ENCODE measurements at regions of chr1 and their contacts with region 1.

Region 1: GRCh38 chr1:150621497-150622302 is 7.7 kb downstream of the ENSA start:
- DNase-seq: no peak
- H3K4me3 ChIP-seq: no peak overlapping the region
- H3K27me3 ChIP-seq: no peaks in the 10 kb centered on the region
- CTCF ChIP-seq: peak; percentile 79

Region 2: GRCh38 chr1:150548632-150549495 is 72.8 kb before region 1 on chr1 and contains the start of gene ADAMTSL4:
- CTCF ChIA-PET with region 1: interaction called, 11 read pairs
- POLR2A ChIA-PET with region 1: no interaction called
- DNase-seq: no peak
- H3K4me3 ChIP-seq: peak within 1 kb of the TSS; percentile 52
- H3K27me3 ChIP-seq: no peaks in the 10 kb centered on the region
- CTCF ChIP-seq: 0 out of 2 replicates have a peak, but pooled peaks have one; percentile 2
- polyA plus RNA-seq, gene ADAMTSL4: 6.1 and 8.6 TPM in 2 replicates

Region 3: DNA sequence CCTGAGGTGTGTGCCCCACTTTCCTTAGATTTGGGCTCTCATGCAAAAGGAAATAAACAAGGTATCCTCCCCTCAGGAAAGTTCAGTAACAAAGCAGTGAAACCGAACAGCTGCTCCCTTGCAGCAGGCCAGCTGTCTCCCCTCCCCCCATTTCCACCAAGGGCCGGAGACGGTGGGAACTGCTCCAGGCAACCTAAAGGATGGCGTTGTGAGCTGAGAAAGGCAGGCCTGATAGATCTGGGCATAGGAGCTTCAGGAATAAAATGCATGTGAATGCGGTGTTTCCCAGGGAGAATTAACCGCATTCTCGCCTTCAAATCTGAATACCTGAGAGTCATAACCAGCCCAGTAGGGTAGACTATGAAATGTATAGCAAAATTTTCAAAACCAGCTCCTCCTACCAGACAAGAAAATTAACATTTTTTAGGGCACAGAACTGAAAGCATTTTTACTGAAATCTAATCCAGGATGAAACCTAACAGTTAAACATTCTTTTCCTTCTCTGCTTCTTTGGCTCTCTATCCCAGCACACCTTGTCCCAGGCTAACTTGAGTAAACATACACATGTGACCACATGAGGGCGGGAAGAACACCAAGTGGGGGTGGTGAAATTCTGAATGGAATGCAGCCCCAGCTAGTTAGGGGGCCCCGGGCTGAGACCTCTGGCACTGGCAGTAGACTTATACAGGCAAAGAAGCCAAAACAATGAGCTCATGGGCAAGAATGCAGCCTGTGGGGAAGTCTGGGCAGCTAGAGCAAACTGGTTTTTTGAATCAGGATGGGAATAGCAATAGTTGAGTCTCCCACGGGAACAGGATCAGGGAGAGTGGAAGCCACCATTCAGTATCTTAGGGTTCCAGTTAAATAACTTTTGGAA is 53.7 kb before region 1 on chr1:
- CTCF ChIA-PET with region 1: interaction called, 121 read pairs
- POLR2A ChIA-PET with region 1: no interaction called
- DNase-seq: peak; percentile 98
- H3K4me3 ChIP-seq: 0 out of 2 replicates have a peak overlapping the region, but pooled peaks have one; percentile 14
- H3K27me3 ChIP-seq: no peaks in the 10 kb centered on the region
- CTCF ChIP-seq: no peak

Region 4: DNA sequence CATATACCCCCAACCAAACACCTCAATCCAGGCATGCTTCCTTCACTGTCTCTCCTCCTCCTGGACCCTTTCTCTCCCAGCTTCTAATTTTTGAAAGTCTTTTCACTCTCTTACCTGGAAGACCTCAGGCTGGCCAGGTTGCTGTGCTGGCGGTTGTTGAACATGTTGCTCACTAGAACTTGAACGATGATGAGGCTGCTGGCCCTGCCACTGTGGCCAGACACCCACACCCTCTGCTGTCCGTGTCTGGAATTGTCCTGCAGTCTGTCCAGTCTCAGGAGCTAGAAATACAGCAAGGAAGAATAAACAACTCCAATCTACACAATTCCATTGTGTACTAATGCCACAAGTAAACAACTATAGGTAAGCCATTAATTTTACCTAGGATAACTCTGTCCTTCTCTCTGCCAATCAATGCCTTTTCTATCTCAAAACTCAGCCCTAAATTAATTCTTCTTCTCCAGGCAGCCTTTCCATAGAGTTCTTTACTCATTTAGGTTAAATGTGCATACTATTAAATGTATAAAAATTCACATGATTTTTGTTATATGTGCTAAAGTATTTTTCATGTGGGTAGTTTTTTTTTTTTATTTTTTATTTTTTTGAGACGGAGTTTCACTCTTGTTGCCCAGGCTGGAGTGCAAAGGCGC is 191.5 kb after region 1 on chr1:
- CTCF ChIA-PET with region 1: interaction called, 19 read pairs
- POLR2A ChIA-PET with region 1: no interaction called
- DNase-seq: no peak
- H3K4me3 ChIP-seq: no peak overlapping the region
- H3K27me3 ChIP-seq: no peaks in the 10 kb centered on the region
- CTCF ChIP-seq: peak; percentile 85

Region 5: DNA sequence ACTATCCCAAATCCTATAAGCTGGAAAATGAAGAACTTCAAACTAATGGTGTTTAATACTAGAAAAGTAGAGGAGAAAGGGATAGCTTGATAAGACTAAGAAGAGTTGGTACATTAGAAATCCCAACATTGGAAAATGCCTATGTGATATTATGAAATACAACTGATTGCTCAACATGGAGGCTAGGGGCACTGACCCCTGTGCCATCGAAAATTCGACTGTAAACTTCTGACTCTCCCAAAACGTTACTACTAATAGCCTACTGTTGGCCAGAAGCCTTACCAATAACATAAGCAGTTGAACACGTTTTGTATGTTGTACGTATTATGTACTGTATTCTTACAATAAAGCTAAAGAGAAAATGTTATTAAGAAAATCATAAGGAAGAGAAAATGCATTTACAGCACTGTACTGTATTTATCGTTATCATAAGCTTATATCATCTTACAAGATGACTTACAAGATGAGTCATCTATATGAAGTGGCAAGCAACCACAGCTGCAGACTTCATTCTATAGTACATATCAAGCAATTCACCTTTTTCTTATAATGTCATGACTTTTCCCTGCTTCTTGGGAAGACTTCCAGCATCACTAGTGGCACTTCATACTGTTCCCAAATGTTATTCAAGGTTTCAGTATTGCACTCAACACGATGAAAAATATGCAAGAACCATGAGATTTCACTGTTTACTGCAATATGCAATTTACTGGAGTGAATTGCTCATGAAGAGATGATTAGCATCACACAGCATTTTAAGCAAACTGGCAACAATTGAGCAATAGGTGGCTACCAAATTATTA is 199.2 kb after region 1 on chr1:
- CTCF ChIA-PET with region 1: interaction called, 4 read pairs
- POLR2A ChIA-PET with region 1: interaction called, 11 read pairs
- DNase-seq: no peak
- H3K4me3 ChIP-seq: no peak overlapping the region
- H3K27me3 ChIP-seq: no peaks in the 10 kb centered on the region
- CTCF ChIP-seq: no peak